Astrocyte of the cerebellum (primary cell): ENCODE measurements at regions of chr1 and their contacts with region 1.

Region 1: GRCh38 chr1:203267347-203267846 is 37.9 kb upstream of the BTG2 start:
- DNase-seq: peak; percentile 73
- H3K4me3 ChIP-seq: peak overlapping the region; percentile 48
- CTCF ChIP-seq: peak; percentile 97

Region 2: GRCh38 chr1:203069030-203069747 is 198.2 kb before region 1 on chr1:
- in situ Hi-C with region 1: no loop called
- DNase-seq: no peak
- H3K4me3 ChIP-seq: no peak overlapping the region
- CTCF ChIP-seq: no peak

Region 3: GRCh38 chr1:203326830-203327683 is 59.7 kb after region 1 on chr1:
- in situ Hi-C with region 1: loop called (anchors 5 kb)
- DNase-seq: peak; percentile 65
- H3K4me3 ChIP-seq: peak overlapping the region; percentile 37
- CTCF ChIP-seq: no peak